ENCODE measurements at regions of chr10 and their contacts with region 1.

Region 1: DNA sequence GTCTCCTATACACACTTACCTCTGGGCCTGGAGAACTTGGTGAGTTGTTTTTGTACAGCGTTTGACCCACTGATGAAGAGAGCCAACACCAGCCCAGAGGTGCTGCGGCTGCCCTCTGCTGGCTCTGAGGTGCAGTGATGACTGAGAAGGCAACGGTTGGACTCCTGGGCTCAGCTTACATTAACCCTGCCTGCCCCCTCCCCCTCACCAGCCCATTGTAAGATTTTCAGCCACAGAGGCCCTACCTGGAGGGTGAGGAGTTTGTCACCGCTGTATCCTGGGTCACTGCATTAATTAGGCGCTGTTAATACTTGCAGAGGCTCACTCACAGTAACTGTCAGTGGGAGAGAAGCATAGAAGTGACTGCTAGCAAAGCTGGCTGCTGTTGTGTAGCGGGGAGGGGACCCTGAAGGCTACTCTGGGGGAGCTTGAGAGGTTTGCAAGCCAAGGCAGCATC is 19.0 kb upstream of the ANKRD2 start:
- DNase-seq: peak; percentile 26
- ATAC-seq: peak; percentile 98
- H3K4me3 ChIP-seq: no peak overlapping the region
- H3K27ac ChIP-seq: no peak overlapping the region
- H3K4me1 ChIP-seq: peaks cover 18% of the 10 kb centered on the region
- H3K27me3 ChIP-seq: no peaks in the 10 kb centered on the region
- CTCF ChIP-seq: peak; percentile 80 to 94 (median 89)
- EP300 ChIP-seq: no peak
- POLR2A ChIP-seq: no peak
- RAD21 ChIP-seq: peak; percentile 78

Region 2: GRCh38 chr10:97412891-97413304 is 140.7 kb before region 1 on chr10:
- CTCF ChIA-PET with region 1: interaction called, 27 read pairs
- POLR2A ChIA-PET with region 1: no interaction called
- RAD21 ChIA-PET with region 1: no interaction called
- SMC1A ChIA-PET with region 1: no interaction called
- in situ Hi-C with region 1: no loop called
- intact Hi-C with region 1: no loop called
- DNase-seq: no peak
- ATAC-seq: peak; percentile 66
- H3K4me3 ChIP-seq: no peak overlapping the region
- H3K27ac ChIP-seq: peak overlapping the region; percentile 20; the same call in 1 of the 2 replicates
- H3K4me1 ChIP-seq: peaks cover 3% of the 10 kb centered on the region; the same call in 1 of the 2 replicates
- H3K27me3 ChIP-seq: no peaks in the 10 kb centered on the region
- CTCF ChIP-seq: no peak
- EP300 ChIP-seq: no peak
- POLR2A ChIP-seq: no peak
- RAD21 ChIP-seq: no peak

Region 3: DNA sequence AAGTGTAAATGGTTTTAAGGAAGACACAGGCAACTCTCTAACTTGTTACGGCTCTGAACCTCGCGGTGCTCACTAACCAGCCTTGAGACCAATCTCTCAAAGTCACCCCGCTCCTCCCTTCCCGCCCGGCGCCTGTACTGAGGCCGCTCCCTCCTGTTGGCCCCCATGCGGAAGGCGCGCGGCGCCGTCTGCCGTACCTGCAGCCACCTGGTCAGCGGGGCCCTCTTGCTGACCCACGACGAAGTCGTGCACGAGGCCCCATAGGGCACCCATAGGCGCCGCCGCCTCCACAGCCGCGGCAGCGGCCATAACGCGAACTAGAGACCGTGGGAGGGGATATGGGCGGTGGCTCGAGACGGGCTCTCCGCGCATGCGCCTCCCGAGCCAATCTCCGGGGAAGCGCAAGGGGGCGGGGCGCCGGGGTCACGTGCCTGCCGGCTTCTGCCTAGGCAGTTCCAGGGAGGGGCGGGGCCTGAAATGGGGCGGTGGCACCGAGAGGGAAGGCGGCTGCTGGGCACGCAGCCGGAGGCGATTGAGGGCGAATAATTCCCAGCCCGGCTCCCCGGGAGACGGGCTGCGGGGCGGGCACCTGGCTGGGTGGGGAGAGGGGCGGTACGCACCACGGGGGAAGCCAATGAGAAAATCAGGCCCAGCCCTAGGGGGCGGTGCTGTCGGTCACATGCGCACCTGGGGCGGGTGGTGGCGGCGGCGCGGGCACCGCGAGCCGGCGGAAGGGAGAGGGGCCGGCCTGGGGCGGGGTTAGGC is 55.3 kb before region 1 on chr10 and contains the start of gene MMS19:
- CTCF ChIA-PET with region 1: interaction called, 3 read pairs
- POLR2A ChIA-PET with region 1: no interaction called
- RAD21 ChIA-PET with region 1: no interaction called
- SMC1A ChIA-PET with region 1: no interaction called
- in situ Hi-C with region 1: no loop called
- intact Hi-C with region 1: loop called (anchors 5 kb)
- DNase-seq: peak; percentile 77
- ATAC-seq: peak; percentile 93
- H3K4me3 ChIP-seq: peak within 1 kb of the TSS; percentile 90
- H3K27ac ChIP-seq: peak within 1 kb of the TSS; percentile 87
- H3K4me1 ChIP-seq: peaks cover 5% of the 10 kb centered on the region
- H3K27me3 ChIP-seq: peaks cover 6 to 14% of the 10 kb centered on the region in 2 experiments
- CTCF ChIP-seq: no peak
- EP300 ChIP-seq: no peak
- POLR2A ChIP-seq: peak; percentile 95
- RAD21 ChIP-seq: no peak
- polyA plus RNA-seq, gene MMS19: 40.2 to 74.3 TPM

Region 4: DNA sequence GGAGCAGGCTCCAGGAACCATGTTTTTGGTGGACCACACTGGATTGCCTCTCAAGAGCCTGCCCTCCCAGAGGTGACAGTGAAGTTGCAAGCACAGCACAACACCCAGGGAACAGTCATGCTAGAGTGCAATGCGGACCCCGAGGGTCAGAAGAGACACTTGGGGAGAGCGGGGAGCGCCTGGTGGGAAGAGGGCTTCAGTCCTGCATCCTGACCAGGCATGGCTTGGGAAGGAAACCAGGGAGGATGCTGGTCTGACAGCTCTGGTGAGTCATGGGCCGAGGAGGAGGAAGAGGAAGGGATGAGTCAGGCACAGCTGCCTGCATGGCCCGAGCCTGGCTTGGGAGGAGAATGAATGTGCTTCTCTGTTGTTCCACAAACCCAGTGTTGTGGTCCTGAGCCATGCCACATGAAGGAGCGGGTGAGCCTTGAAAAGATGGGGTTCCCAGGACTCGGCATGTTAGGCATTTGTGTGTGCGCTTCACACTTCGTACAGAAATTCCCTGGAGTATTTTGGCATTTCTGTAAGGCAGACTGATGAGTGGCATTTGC is 10.5 kb before region 1 on chr10:
- CTCF ChIA-PET with region 1: interaction called, 18 read pairs
- POLR2A ChIA-PET with region 1: no interaction called
- RAD21 ChIA-PET with region 1: no interaction called
- SMC1A ChIA-PET with region 1: interaction called, 5 read pairs
- in situ Hi-C with region 1: no loop called
- intact Hi-C with region 1: no loop called
- DNase-seq: no peak
- ATAC-seq: peak; percentile 58
- H3K4me3 ChIP-seq: no peak overlapping the region
- H3K27ac ChIP-seq: no peak overlapping the region
- H3K4me1 ChIP-seq: no peaks in the 10 kb centered on the region
- H3K27me3 ChIP-seq: no peaks in the 10 kb centered on the region; a peak in 1 of 4 replicates
- CTCF ChIP-seq: no peak
- EP300 ChIP-seq: no peak
- POLR2A ChIP-seq: no peak
- RAD21 ChIP-seq: no peak

Measured in GM12878 (cell line).